ENCODE measurements at regions of chr15 and their contacts with region 1.

Region 1: GRCh38 chr15:85661859-85662258 is 132.9 kb downstream of the KLHL25 start:
- DNase-seq: no peak
- ATAC-seq: no peak
- H3K4me3 ChIP-seq: no peak overlapping the region
- H3K27ac ChIP-seq: no peak overlapping the region
- H3K4me1 ChIP-seq: no peaks in the 10 kb centered on the region
- H3K27me3 ChIP-seq: no peaks in the 10 kb centered on the region
- CTCF ChIP-seq: no peak
- POLR2A ChIP-seq: no peak
- RAD21 ChIP-seq: no peak

Region 2: DNA sequence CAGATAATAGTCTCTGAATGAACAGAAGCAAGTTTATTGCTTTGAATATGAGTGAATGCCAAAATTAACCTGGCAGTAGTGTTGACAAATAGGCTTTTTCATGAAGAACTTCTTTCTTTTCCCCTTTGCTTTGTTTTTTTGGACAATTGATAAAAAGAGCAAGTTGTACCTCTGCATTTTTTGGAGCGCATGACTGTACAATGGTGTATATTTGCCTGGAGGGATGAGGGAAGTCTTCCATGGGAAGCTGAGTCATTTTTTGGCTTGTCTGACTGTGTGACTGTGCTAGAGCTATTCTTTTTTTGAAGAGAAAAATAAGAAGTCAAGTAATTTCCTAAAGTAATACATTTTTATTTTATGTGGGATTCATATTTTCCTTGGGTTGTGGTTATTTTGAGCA is 54.0 kb before region 1 on chr15:
- CTCF ChIA-PET with region 1: no interaction called
- POLR2A ChIA-PET with region 1: no interaction called
- dilution Hi-C with region 1: no loop called
- in situ Hi-C with region 1: no loop called
- intact Hi-C with region 1: no loop called
- DNase-seq: peak; percentile 93
- ATAC-seq: peak; percentile 98
- H3K4me3 ChIP-seq: no peak overlapping the region
- H3K27ac ChIP-seq: no peak overlapping the region
- H3K4me1 ChIP-seq: peaks cover 9% of the 10 kb centered on the region
- H3K27me3 ChIP-seq: no peaks in the 10 kb centered on the region
- CTCF ChIP-seq: no peak
- POLR2A ChIP-seq: no peak
- RAD21 ChIP-seq: no peak

Region 3: GRCh38 chr15:85646538-85647091 is 15.2 kb before region 1 on chr15:
- CTCF ChIA-PET with region 1: interaction called, 3 read pairs
- POLR2A ChIA-PET with region 1: interaction called, 11 read pairs
- dilution Hi-C with region 1: no loop called
- in situ Hi-C with region 1: no loop called
- intact Hi-C with region 1: no loop called
- DNase-seq: peak; percentile 93
- ATAC-seq: peak; percentile 76
- H3K4me3 ChIP-seq: no peak overlapping the region
- H3K27ac ChIP-seq: no peak overlapping the region
- H3K4me1 ChIP-seq: peaks cover 15% of the 10 kb centered on the region
- H3K27me3 ChIP-seq: no peaks in the 10 kb centered on the region
- CTCF ChIP-seq: no peak
- POLR2A ChIP-seq: no peak
- RAD21 ChIP-seq: no peak

Measured in IMR-90 (cell line).